Activated naive CD4-positive, alpha-beta T cell treated with anti-CD3 and anti-CD28 coated beads for 36 hours (primary cell): ENCODE measurements at regions of chr1 and their contacts with region 1.

Region 1: GRCh38 chr1:111755331-111756123 is at the start of gene DDX20:
- DNase-seq: peak; percentile 95
- H3K4me3 Mint-ChIP-seq: peak within 1 kb of the TSS; percentile 82
- H3K27ac Mint-ChIP-seq: peak within 1 kb of the TSS; percentile 97
- H3K4me1 Mint-ChIP-seq: peaks cover 34% of the 10 kb centered on the region
- H3K27me3 Mint-ChIP-seq: no peaks in the 10 kb centered on the region
- total RNA-seq, gene DDX20: 11.4 to 13.3 TPM

Region 2: DNA sequence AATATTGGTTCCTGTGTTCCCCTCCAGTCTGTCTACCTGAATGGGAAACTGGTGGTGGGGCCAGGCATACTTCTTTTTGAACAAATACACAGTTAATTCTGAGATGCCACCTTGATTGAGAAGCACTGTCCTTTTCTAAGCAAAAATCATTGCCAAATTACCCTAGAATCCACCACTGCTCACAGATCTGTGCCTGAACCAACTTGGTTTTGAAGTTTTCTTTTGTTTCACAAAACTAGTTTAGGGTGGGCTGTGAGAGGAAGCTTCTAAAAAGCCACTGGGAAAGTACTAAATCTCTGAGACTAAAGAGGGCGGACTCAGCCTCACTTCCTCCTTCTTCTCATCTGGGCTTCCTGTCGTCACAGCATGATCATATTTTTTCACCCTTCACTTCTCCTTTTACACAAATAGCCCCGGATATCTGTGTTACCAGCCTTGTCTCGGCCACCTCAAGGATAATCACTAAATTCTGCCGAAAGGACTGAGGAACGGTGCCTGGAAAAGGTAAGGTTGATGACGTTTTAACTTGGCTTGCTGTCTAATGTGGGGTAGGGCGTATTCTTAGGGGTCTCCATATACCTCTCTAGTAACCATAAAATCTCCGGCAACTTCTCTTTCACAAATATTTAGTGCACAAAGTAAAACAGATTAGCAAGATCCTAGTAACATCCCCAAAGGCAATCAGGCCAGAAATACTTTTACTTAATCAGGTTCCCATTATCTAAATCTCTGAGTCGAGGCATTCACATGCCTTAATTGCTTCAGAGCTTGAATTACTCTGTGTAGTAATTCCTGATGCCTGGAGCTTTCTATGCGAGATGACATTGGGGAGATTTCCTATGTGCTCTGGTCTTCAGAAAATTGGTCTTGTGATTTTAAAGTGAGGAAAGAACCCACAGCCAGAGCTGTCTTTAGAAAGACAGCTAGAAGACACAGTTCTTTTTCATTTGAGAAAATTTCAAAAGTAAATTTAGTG is 882.5 kb before region 1 on chr1 and contains the start of gene CD53:
- CTCF ChIA-PET with region 1: no interaction called
- intact Hi-C with region 1: loop called (anchors 5 kb)
- DNase-seq: peak; percentile 72
- H3K4me3 Mint-ChIP-seq: peak within 1 kb of the TSS; percentile 91
- H3K27ac Mint-ChIP-seq: peak within 1 kb of the TSS; percentile 99
- H3K4me1 Mint-ChIP-seq: peaks cover 39% of the 10 kb centered on the region
- H3K27me3 Mint-ChIP-seq: no peaks in the 10 kb centered on the region
- total RNA-seq, gene CD53: 239 to 255 TPM

Region 3: GRCh38 chr1:111406321-111406768 is 349.2 kb before region 1 on chr1:
- CTCF ChIA-PET with region 1: no interaction called
- intact Hi-C with region 1: loop called (anchors 1 kb)
- DNase-seq: peak; percentile 70
- H3K4me3 Mint-ChIP-seq: no peak overlapping the region
- H3K27ac Mint-ChIP-seq: no peak overlapping the region
- H3K4me1 Mint-ChIP-seq: peaks cover 28% of the 10 kb centered on the region
- H3K27me3 Mint-ChIP-seq: no peaks in the 10 kb centered on the region

Region 4: DNA sequence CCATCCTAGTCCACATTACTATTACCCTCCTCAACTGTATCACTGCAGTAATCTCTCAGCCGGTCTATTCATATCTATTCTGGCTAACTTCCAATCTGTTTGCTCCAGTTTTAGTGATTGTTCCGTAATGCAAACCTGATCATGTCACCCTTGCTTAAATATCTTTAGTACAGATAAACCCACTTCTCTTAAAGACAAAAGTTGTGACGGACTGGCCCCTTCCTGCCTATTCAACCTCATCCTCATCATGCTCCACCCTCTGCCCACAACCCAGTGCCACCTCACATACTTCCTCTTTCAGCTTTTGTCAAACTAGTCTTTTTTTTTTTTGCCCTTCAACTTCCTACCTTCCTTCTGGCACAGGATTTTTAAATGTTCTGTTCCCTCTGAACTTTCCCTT is 284.5 kb before region 1 on chr1:
- CTCF ChIA-PET with region 1: interaction called, 4 read pairs
- intact Hi-C with region 1: loop called (anchors 1 kb)
- DNase-seq: peak; percentile 88
- H3K4me3 Mint-ChIP-seq: no peak overlapping the region
- H3K27ac Mint-ChIP-seq: no peak overlapping the region
- H3K4me1 Mint-ChIP-seq: peaks cover 24% of the 10 kb centered on the region
- H3K27me3 Mint-ChIP-seq: no peaks in the 10 kb centered on the region

Region 5: DNA sequence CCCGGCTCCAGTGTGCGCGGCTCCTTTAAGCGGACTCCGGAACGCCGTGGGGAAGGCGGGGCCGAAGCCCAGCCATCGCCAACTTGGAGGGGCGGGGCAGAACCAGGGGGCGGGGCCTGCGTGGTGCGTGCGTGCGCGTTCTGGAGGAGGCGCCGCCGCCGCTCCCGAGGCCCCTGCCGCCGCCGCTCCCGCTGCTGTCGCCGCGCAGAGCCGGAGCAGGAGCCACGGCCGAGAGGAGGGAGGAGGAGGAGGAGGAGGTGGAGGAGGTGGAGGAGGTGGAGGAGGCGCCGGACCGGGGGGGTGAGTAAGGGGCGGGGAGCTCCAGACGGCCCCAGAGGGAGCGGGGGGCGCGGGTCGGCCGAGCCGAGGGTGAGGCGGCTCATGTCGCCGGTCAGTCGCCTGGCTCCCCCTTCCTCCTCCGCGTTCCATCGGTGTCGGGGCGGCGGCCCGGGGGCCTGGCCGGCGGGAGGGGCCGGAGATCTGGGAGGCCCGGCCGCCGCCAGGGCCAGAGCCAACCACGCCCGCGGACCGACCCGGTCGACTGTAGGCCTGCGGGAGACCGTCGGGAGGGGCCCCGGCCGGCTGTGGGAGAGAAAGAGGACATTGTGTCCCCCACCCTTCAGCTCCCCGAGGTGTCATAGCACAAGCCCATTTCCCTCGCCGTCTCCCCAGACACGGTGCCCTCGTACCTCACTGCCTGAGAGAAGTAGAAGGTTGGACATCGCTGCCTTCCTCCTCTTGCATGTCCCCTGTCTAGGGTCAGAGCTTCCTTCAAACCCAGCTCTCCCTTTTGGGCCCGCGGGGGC is 135.7 kb before region 1 on chr1 and contains the start of gene RAP1A:
- CTCF ChIA-PET with region 1: no interaction called
- intact Hi-C with region 1: loop called (anchors 1 kb)
- DNase-seq: peak; percentile 97
- H3K4me3 Mint-ChIP-seq: peak within 1 kb of the TSS; percentile 93
- H3K27ac Mint-ChIP-seq: peak within 1 kb of the TSS; percentile 96
- H3K4me1 Mint-ChIP-seq: peaks cover 68% of the 10 kb centered on the region
- H3K27me3 Mint-ChIP-seq: no peaks in the 10 kb centered on the region
- total RNA-seq, gene RAP1A: 152 to 155 TPM

Region 6: GRCh38 chr1:111739194-111739924 is 16.2 kb before region 1 on chr1 and contains the start of gene INKA2:
- CTCF ChIA-PET with region 1: interaction called, 16 read pairs
- intact Hi-C with region 1: loop called (anchors 1 kb)
- DNase-seq: peak; percentile 82
- H3K4me3 Mint-ChIP-seq: peak within 1 kb of the TSS; percentile 87
- H3K27ac Mint-ChIP-seq: peak within 1 kb of the TSS; percentile 60
- H3K4me1 Mint-ChIP-seq: peaks cover 16% of the 10 kb centered on the region
- H3K27me3 Mint-ChIP-seq: peaks cover 35% of the 10 kb centered on the region
- total RNA-seq, gene INKA2: 1.9 to 3.2 TPM

Region 7: DNA sequence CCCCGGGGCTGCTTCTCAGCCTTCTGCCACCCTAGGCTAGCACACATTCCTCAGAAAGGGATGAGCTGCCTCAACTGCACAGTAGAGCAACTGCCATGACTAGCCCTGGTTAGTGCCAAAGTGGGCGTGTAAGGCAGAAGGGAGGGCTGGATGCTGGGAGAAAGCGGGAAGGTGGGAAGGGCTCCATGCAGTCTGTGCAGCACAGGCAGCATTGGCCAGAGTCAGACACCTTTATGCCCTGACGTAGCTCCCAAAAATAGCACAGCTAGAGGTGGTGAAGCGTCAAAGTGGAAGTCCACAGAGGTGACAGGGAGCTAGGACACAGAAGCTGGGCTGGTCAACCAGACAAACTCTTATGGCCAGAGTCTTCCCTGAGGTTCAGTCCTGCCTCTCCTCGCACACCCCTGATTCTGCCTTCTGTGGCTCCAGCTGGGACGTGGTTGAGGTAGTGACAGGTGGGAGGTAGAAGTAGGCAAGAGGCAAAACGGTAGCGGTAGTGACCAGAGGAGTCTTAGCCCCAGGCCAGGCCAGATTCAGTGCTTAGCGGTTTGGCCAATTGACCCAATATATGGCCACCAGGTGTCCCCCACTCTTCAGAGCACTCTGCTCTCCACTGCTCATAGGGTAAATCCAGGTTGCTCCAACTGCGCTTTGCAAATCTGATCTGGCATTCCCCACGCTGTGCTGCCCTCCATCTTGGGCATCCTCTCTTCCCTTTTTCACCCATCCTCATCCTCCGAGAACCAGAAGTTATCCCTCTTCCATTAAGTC is 45.7 kb after region 1 on chr1:
- CTCF ChIA-PET with region 1: no interaction called
- intact Hi-C with region 1: no loop called
- DNase-seq: no peak
- H3K4me3 Mint-ChIP-seq: no peak overlapping the region
- H3K27ac Mint-ChIP-seq: no peak overlapping the region
- H3K4me1 Mint-ChIP-seq: no peaks in the 10 kb centered on the region
- H3K27me3 Mint-ChIP-seq: peaks cover 3% of the 10 kb centered on the region

Region 8: GRCh38 chr1:112619520-112620376 is 864.2 kb after region 1 on chr1 and contains the start of gene CAPZA1:
- CTCF ChIA-PET with region 1: no interaction called
- intact Hi-C with region 1: loop called (anchors 1 kb)
- DNase-seq: peak; percentile 95
- H3K4me3 Mint-ChIP-seq: peak within 1 kb of the TSS; percentile 99
- H3K27ac Mint-ChIP-seq: peak within 1 kb of the TSS; percentile 100
- H3K4me1 Mint-ChIP-seq: peaks cover 48% of the 10 kb centered on the region
- H3K27me3 Mint-ChIP-seq: no peaks in the 10 kb centered on the region
- total RNA-seq, gene CAPZA1: 231 to 242 TPM